ENCODE measurements at regions of chr4 and their contacts with region 1.

Region 1: DNA sequence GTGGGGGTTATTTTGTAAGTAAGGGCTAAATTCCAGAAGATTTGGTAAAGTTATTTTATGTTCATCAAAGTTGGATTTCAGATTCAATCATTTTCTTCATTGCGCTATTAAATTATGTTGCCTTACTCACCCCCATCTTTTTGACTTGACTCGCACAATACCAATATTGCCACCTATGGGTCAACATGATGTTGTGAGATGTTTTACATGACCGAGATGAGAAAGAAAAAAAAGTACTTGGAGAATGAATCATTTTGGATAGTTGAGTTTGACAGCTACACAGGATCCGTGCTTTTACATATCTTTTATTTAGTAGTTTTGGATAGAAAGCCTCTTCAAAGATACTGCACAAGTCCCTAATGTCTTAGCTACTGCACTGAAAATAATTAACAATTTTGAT is 224.2 kb upstream of the EMCN start:
- DNase-seq: peak; percentile 67
- H3K4me3 ChIP-seq: no peak overlapping the region
- H3K27ac ChIP-seq: no peak overlapping the region
- H3K4me1 ChIP-seq: peaks cover 18% of the 10 kb centered on the region
- H3K27me3 ChIP-seq: no peaks in the 10 kb centered on the region
- CTCF ChIP-seq: peak; percentile 45 to 49
- POLR2A ChIP-seq: no peak

Region 2: GRCh38 chr4:100288161-100288560 is 453.9 kb before region 1 on chr4:
- CTCF ChIA-PET with region 1: no interaction called
- POLR2A ChIA-PET with region 1: no interaction called
- dilution Hi-C with region 1: no loop called
- intact Hi-C with region 1: loop called (anchors 5 kb)
- DNase-seq: no peak
- H3K4me3 ChIP-seq: no peak overlapping the region
- H3K27ac ChIP-seq: no peak overlapping the region
- H3K4me1 ChIP-seq: peaks cover 31% of the 10 kb centered on the region
- H3K27me3 ChIP-seq: no peaks in the 10 kb centered on the region
- CTCF ChIP-seq: no peak
- POLR2A ChIP-seq: no peak

Region 3: GRCh38 chr4:100372432-100372831 is 369.6 kb before region 1 on chr4:
- CTCF ChIA-PET with region 1: interaction called, 13 read pairs
- POLR2A ChIA-PET with region 1: no interaction called
- dilution Hi-C with region 1: no loop called
- intact Hi-C with region 1: loop called (anchors 1 kb)
- DNase-seq: no peak
- H3K4me3 ChIP-seq: no peak overlapping the region
- H3K27ac ChIP-seq: no peak overlapping the region
- H3K4me1 ChIP-seq: no peaks in the 10 kb centered on the region
- H3K27me3 ChIP-seq: no peaks in the 10 kb centered on the region
- CTCF ChIP-seq: peak; percentile 54 to 55
- POLR2A ChIP-seq: no peak

Region 4: GRCh38 chr4:100421361-100421978 is 320.6 kb before region 1 on chr4:
- CTCF ChIA-PET with region 1: interaction called, 9 read pairs
- POLR2A ChIA-PET with region 1: no interaction called
- dilution Hi-C with region 1: no loop called
- intact Hi-C with region 1: loop called (anchors 1 kb)
- DNase-seq: peak; percentile 73
- H3K4me3 ChIP-seq: no peak overlapping the region
- H3K27ac ChIP-seq: peak overlapping the region; percentile 43
- H3K4me1 ChIP-seq: peaks cover 18% of the 10 kb centered on the region
- H3K27me3 ChIP-seq: no peaks in the 10 kb centered on the region
- CTCF ChIP-seq: peak; percentile 30 to 44
- POLR2A ChIP-seq: no peak

Region 5: DNA sequence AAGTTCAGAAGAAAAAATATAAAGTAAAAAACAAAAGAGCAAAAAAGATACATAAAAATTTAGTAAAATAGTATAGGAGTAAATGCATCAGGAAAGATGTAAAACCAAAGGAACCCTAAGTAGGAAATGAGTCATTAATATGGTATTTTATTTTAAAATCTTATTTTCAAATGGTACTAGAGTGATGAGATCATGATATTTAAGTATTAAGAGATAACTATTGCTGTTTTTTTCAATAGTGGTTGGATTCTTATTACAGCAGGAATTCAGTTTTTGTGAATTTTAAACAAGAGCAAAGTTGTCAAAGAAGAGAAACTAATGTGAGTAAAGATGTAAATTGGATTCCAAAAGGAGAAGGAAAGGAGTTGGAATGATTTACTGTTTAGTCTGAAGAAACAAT is 244.3 kb before region 1 on chr4:
- CTCF ChIA-PET with region 1: no interaction called
- POLR2A ChIA-PET with region 1: no interaction called
- dilution Hi-C with region 1: no loop called
- intact Hi-C with region 1: loop called (anchors 5 kb)
- DNase-seq: peak; percentile 21
- H3K4me3 ChIP-seq: no peak overlapping the region
- H3K27ac ChIP-seq: peak overlapping the region; percentile 45
- H3K4me1 ChIP-seq: peaks cover 10% of the 10 kb centered on the region
- H3K27me3 ChIP-seq: no peaks in the 10 kb centered on the region
- CTCF ChIP-seq: no peak
- POLR2A ChIP-seq: no peak

Region 6: GRCh38 chr4:100722866-100723459 is 19.1 kb before region 1 on chr4:
- CTCF ChIA-PET with region 1: no interaction called
- POLR2A ChIA-PET with region 1: no interaction called
- dilution Hi-C with region 1: no loop called
- intact Hi-C with region 1: no loop called
- DNase-seq: no peak
- H3K4me3 ChIP-seq: no peak overlapping the region
- H3K27ac ChIP-seq: no peak overlapping the region
- H3K4me1 ChIP-seq: no peaks in the 10 kb centered on the region
- H3K27me3 ChIP-seq: no peaks in the 10 kb centered on the region
- CTCF ChIP-seq: no peak
- POLR2A ChIP-seq: no peak